ENCODE measurements at regions of chr17 and their contacts with region 1.

Region 1: DNA sequence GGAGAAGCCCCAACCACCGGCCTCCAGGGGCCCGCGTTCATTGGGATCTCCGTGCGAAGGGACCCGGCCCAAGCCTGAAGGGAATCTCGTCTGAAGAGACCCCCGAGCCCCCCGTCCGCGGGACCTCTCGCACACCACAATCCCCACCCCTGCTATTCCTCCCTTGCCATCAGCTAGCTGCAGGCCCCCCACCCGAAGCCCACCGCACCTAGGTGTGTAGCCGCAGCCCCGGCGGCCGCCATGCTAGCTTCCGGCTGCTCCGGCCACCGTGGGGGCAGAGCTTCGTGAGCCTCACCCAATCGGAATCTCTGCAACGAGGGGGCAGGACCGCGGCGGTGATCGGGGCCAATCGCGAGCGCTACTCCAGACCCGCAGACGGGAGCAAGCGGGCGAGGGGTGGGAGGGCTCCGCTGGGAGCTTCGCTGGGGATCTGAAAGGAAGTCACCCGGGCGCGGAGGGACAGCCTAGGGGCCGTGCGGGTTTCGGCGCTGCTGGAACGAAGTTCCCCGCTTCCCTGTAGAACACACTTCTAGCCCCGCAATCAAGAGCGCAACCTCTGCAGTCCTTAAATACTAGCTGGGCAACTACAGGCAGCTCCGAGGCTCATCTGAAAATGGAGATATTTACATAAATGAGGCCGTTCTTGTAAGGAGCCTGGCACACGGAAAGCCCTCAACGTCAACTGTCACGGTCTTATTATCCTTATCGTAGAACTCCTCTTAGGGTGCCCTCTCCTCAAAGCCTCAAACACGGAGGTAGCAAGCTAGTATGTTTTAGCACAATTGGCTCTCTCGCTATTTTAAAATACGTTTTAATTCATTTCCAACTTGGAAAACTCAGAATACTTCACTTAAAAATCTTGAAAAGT is at the start of gene PIGS:
- DNase-seq: peak; percentile 86 to 93 (median 89)
- H3K4me3 ChIP-seq: peak within 1 kb of the TSS; percentile 98
- H3K4me3 Mint-ChIP-seq: peak within 1 kb of the TSS; percentile 95 to 98 (median 97)
- H3K27ac ChIP-seq: peak within 1 kb of the TSS; percentile 78
- H3K27ac Mint-ChIP-seq: peak within 1 kb of the TSS; percentile 88 to 97 (median 95)
- H3K4me1 ChIP-seq: peaks cover 45% of the 10 kb centered on the region
- H3K4me1 Mint-ChIP-seq: peaks cover 59 to 79% (median 60%) of the 10 kb centered on the region in 3 donors
- H3K27me3 ChIP-seq: no peaks in the 10 kb centered on the region
- H3K27me3 Mint-ChIP-seq: no peaks in the 10 kb centered on the region
- total RNA-seq, gene PIGS: 48.7 to 50.0 TPM

Region 2: GRCh38 chr17:28018439-28019070 is 552.9 kb before region 1 on chr17:
- CTCF ChIA-PET with region 1: no interaction called
- POLR2A ChIA-PET with region 1: no interaction called
- DNase-seq: no peak
- H3K4me3 ChIP-seq: no peak overlapping the region
- H3K4me3 Mint-ChIP-seq: no peak overlapping the region
- H3K27ac ChIP-seq: no peak overlapping the region
- H3K27ac Mint-ChIP-seq: no peak overlapping the region
- H3K4me1 ChIP-seq: no peaks in the 10 kb centered on the region
- H3K4me1 Mint-ChIP-seq: no peaks in the 10 kb centered on the region
- H3K27me3 ChIP-seq: no peaks in the 10 kb centered on the region
- H3K27me3 Mint-ChIP-seq: peaks cover 15 to 38% of the 10 kb centered on the region in 2 donors

Region 3: GRCh38 chr17:28552246-28552999 is 19.1 kb before region 1 on chr17 and contains the start of gene UNC119:
- CTCF ChIA-PET with region 1: interaction called, 13 read pairs
- POLR2A ChIA-PET with region 1: interaction called, 3 read pairs
- DNase-seq: peak; percentile 72 to 82 (median 75)
- H3K4me3 ChIP-seq: peak within 1 kb of the TSS; percentile 54
- H3K4me3 Mint-ChIP-seq: peak within 1 kb of the TSS; percentile 88 to 94 (median 92)
- H3K27ac ChIP-seq: peak within 1 kb of the TSS; percentile 36
- H3K27ac Mint-ChIP-seq: peak within 1 kb of the TSS; percentile 87 to 98 (median 94)
- H3K4me1 ChIP-seq: peaks cover 44% of the 10 kb centered on the region
- H3K4me1 Mint-ChIP-seq: peaks cover 47 to 54% (median 50%) of the 10 kb centered on the region in 3 donors
- H3K27me3 ChIP-seq: no peaks in the 10 kb centered on the region
- H3K27me3 Mint-ChIP-seq: no peaks in the 10 kb centered on the region
- total RNA-seq, gene UNC119: 28.9 to 29.1 TPM